ENCODE measurements at regions of chr9 and their contacts with region 1.

Region 1: DNA sequence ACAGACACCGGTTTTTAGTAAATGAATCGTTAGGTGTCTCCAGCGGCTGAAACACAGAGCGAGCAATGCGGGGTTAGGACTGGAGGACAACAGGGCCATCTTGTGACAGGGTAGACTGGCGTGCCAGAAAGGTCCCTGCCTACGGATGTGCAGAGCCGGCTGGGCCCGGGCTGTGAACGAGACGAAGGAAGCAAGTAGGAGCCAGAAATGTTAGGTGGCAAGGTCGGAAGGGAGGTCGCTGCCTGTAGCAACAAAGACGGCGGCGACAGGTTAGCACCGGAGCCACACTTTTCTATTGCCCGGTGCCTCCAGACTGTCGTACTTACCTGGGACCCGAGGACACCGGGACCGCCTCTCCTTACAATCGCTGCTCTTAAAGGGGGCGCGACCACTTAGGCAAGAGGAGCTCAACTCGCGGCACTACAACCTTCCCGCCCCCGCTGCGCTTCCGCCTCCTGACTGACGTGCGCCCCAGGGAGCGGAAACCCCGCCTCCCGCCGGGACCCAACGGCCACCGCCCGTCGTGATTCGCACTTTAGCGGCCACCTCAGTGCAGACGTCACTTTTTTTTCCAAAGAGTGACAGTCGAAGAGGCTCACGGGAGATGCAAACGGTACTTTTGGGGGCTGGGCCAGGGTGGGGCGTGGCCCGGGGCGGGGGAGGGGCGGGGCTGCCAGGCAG is at the start of gene INIP:
- DNase-seq: peak; percentile 91 to 99 (median 98)
- ATAC-seq: peak; percentile 94
- H3K4me3 ChIP-seq: peak within 1 kb of the TSS; percentile 82
- H3K4me3 Mint-ChIP-seq: peak within 1 kb of the TSS; percentile 83 to 100 (median 96)
- H3K27ac ChIP-seq: peak within 1 kb of the TSS; percentile 96
- H3K27ac Mint-ChIP-seq: peak within 1 kb of the TSS; percentile 96 to 100 (median 99)
- H3K4me1 ChIP-seq: peaks cover 10% of the 10 kb centered on the region in 2 donors
- H3K4me1 Mint-ChIP-seq: peaks cover 14 to 39% (median 28%) of the 10 kb centered on the region in 7 donors
- H3K27me3 ChIP-seq: no peaks in the 10 kb centered on the region
- H3K27me3 Mint-ChIP-seq: no peaks in the 10 kb centered on the region
- total RNA-seq, gene INIP: 13.8 to 35.0 (median 28.3) TPM

Region 2: DNA sequence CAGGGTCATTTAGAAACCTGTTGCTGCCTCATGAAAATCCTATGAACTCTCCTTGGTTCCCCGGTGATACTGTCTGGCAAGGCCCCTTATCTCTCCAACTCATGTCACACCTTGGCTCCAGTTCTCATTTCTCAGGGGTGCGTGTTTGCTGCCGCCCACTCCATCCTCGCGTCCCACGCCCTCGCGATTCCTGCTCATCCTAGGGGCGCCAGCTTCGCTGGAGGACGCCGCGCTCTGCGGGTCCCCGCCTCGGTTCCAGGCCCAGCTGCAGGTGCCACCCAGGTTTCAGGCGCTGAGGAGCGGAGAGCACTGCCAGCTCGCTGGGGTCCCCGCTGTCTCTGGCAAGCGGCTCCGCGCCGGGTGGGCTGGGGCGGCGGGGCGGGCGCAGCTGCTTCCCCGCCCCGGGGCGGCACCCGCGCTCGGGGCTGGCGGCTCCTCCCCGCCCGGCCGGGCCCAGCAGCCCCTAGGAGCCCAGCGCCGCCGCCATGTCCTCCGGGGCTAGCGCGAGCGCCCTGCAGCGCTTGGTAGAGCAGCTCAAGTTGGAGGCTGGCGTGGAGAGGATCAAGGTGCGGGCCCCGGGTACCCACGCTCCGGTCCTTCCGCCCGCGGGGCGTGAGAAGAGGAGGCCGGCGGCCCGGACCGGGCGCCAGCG is 1056.5 kb before region 1 on chr9 and contains the start of gene GNG10:
- CTCF ChIA-PET with region 1: no interaction called
- POLR2A ChIA-PET with region 1: interaction called, 3 read pairs
- intact Hi-C with region 1: loop called (anchors 2 to 5 kb)
- DNase-seq: peak; percentile 57 to 79 (median 68)
- ATAC-seq: peak; percentile 95
- H3K4me3 ChIP-seq: peak within 1 kb of the TSS; percentile 70
- H3K4me3 Mint-ChIP-seq: peak within 1 kb of the TSS; percentile 87 to 97 (median 93)
- H3K27ac ChIP-seq: peak within 1 kb of the TSS; percentile 71
- H3K27ac Mint-ChIP-seq: peak within 1 kb of the TSS; percentile 82 to 97 (median 92)
- H3K4me1 ChIP-seq: peaks cover 18 to 31% of the 10 kb centered on the region in 2 donors
- H3K4me1 Mint-ChIP-seq: peaks cover 16 to 44% (median 32%) of the 10 kb centered on the region in 7 donors
- H3K27me3 ChIP-seq: no peaks in the 10 kb centered on the region
- H3K27me3 Mint-ChIP-seq: no peaks in the 10 kb centered on the region
- total RNA-seq, gene GNG10: 5.3 to 26.1 (median 12.2) TPM

Region 3: GRCh38 chr9:112180387-112180881 is 537.4 kb before region 1 on chr9:
- CTCF ChIA-PET with region 1: no interaction called
- POLR2A ChIA-PET with region 1: no interaction called
- intact Hi-C with region 1: loop called in 1 of 2 experiments (anchors 5 kb)
- DNase-seq: peak in 4 of 9 donors; percentile 3 to 55 (median 18)
- ATAC-seq: peak; percentile 74
- H3K4me3 ChIP-seq: no peak overlapping the region
- H3K4me3 Mint-ChIP-seq: peak overlapping the region in 5 of 10 donors; percentile 35 to 66 (median 51)
- H3K27ac ChIP-seq: no peak overlapping the region
- H3K27ac Mint-ChIP-seq: peak overlapping the region in 8 of 9 donors; percentile 39 to 90 (median 78)
- H3K4me1 ChIP-seq: peaks cover 26 to 44% of the 10 kb centered on the region in 2 donors
- H3K4me1 Mint-ChIP-seq: peaks cover 26 to 61% (median 56%) of the 10 kb centered on the region in 7 donors
- H3K27me3 ChIP-seq: no peaks in the 10 kb centered on the region
- H3K27me3 Mint-ChIP-seq: peaks cover 0 to 8% (median 0%) of the 10 kb centered on the region in 5 donors

Region 4: DNA sequence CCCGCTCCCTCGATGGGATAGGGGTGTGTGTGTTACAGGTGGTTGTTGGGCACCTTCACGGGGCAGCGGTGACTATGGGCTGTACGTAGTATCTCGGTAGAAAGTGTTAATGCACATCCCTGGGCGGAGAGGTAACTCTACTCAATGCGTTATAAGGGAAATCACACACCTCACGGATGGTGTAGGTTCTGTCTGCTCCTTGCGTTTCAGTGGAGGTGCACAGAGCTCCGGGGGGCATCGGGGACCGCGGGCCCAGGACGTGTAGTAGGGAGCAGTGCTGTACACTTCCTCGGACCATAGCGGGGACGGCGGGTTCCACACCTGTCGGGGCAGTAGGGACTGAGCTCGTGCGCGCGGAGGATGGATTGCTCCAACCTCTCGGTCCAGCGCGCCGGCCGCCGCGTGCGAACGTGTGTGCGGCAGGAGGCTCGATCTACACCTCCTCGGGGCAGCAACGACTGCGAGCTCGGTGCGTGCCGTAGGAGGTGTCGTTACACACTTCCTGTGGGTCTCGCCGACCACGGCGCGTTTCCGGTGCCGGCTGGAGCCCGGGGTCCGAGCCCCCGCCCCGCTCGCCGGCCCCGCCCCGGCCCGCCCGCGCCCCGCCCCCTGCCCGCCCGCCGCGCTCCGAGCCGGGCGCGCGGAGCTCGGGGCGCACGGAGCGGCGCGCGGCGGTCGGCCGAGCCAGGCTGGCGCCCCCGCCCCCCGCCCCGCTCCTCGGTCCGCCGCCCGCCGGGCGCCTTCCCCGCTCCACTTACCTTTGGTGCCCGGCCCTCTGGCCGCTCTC is 231.4 kb before region 1 on chr9 and contains the start of gene KIAA1958:
- CTCF ChIA-PET with region 1: no interaction called
- POLR2A ChIA-PET with region 1: interaction called, 3 read pairs
- intact Hi-C with region 1: loop called (anchors 1 kb)
- DNase-seq: peak; percentile 51 to 88 (median 73)
- ATAC-seq: peak; percentile 88
- H3K4me3 ChIP-seq: peak within 1 kb of the TSS; percentile 69
- H3K4me3 Mint-ChIP-seq: peak within 1 kb of the TSS; percentile 95 to 100 (median 98)
- H3K27ac ChIP-seq: peak within 1 kb of the TSS; percentile 72
- H3K27ac Mint-ChIP-seq: peak within 1 kb of the TSS; percentile 93 to 98 (median 97)
- H3K4me1 ChIP-seq: peaks cover 4 to 6% of the 10 kb centered on the region in 2 donors
- H3K4me1 Mint-ChIP-seq: peaks cover 19 to 64% (median 49%) of the 10 kb centered on the region in 7 donors
- H3K27me3 ChIP-seq: no peaks in the 10 kb centered on the region
- H3K27me3 Mint-ChIP-seq: peaks cover 0 to 6% (median 0%) of the 10 kb centered on the region in 5 donors
- total RNA-seq, gene KIAA1958: 6.2 to 8.3 (median 7.0) TPM

Region 5: GRCh38 chr9:112793213-112793810 is 75.5 kb after region 1 on chr9:
- CTCF ChIA-PET with region 1: no interaction called
- POLR2A ChIA-PET with region 1: no interaction called
- intact Hi-C with region 1: loop called (anchors 1 kb)
- DNase-seq: peak; percentile 59 to 76 (median 72)
- ATAC-seq: peak; percentile 98
- H3K4me3 ChIP-seq: no peak overlapping the region
- H3K4me3 Mint-ChIP-seq: no peak overlapping the region
- H3K27ac ChIP-seq: no peak overlapping the region
- H3K27ac Mint-ChIP-seq: no peak overlapping the region
- H3K4me1 ChIP-seq: no peaks in the 10 kb centered on the region
- H3K4me1 Mint-ChIP-seq: peaks cover 0 to 19% (median 12%) of the 10 kb centered on the region in 7 donors
- H3K27me3 ChIP-seq: no peaks in the 10 kb centered on the region
- H3K27me3 Mint-ChIP-seq: no peaks in the 10 kb centered on the region

Region 6: DNA sequence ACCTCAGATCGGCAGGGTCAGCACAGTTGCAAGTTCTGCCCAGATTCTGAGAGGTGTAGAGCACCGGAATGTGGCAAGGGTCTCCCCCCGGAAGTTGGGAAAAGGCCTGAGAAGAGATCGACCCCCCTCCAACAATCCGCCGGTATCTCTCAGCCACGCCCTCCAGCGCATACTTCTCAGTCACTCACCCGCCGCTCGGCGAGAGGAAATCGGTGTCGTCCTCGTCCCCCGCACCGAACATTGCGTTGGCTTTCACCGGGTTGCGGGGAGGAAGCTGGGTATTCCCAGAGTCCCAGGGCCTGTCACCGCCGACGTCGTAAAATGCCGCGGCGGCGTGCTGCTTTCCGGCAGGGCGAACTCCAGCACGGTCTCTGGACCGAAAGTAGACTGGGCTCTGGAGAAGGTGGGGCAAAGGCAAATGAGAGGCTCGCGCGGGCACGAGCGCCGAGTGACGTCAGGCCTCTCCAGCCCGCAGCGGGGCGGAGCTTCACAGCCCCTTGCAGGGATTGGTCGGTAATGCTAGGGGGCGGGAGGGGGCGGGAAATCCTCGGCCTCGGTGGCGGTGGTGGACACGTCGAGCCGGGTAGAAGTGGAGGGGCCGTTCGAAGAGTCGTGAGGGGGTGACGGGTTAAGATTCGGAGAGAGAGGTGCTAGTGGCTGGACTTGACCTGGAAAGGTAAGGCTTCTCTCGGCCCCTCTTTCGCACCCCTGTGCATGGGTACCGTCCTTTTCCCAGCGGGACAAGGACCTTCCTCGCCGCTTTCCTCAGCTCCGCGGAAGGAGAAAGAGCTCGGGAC is 503.4 kb after region 1 on chr9 and contains the starts of genes FKBP15 and SLC31A1:
- CTCF ChIA-PET with region 1: no interaction called
- POLR2A ChIA-PET with region 1: no interaction called
- intact Hi-C with region 1: loop called in 1 of 2 experiments (anchors 2 kb)
- DNase-seq: peak; percentile 88 to 96 (median 96)
- ATAC-seq: peak; percentile 99
- H3K4me3 ChIP-seq: peak within 1 kb of the TSS; percentile 91
- H3K4me3 Mint-ChIP-seq: peak within 1 kb of the TSS; percentile 89 to 99 (median 94)
- H3K27ac ChIP-seq: peak within 1 kb of the TSS; percentile 94
- H3K27ac Mint-ChIP-seq: peak within 1 kb of the TSS; percentile 86 to 98 (median 94)
- H3K4me1 ChIP-seq: peaks cover 10 to 25% of the 10 kb centered on the region in 2 donors
- H3K4me1 Mint-ChIP-seq: peaks cover 15 to 58% (median 48%) of the 10 kb centered on the region in 7 donors
- H3K27me3 ChIP-seq: no peaks in the 10 kb centered on the region
- H3K27me3 Mint-ChIP-seq: no peaks in the 10 kb centered on the region
- total RNA-seq, gene FKBP15: 22.4 to 50.6 (median 33.4) TPM
- total RNA-seq, gene SLC31A1: 4.5 to 10.4 (median 4.7) TPM

Measured in naive thymus-derived CD4-positive, alpha-beta T cell (primary cell).